ENCODE measurements at regions of chr3 and their contacts with region 1.

Region 1: DNA sequence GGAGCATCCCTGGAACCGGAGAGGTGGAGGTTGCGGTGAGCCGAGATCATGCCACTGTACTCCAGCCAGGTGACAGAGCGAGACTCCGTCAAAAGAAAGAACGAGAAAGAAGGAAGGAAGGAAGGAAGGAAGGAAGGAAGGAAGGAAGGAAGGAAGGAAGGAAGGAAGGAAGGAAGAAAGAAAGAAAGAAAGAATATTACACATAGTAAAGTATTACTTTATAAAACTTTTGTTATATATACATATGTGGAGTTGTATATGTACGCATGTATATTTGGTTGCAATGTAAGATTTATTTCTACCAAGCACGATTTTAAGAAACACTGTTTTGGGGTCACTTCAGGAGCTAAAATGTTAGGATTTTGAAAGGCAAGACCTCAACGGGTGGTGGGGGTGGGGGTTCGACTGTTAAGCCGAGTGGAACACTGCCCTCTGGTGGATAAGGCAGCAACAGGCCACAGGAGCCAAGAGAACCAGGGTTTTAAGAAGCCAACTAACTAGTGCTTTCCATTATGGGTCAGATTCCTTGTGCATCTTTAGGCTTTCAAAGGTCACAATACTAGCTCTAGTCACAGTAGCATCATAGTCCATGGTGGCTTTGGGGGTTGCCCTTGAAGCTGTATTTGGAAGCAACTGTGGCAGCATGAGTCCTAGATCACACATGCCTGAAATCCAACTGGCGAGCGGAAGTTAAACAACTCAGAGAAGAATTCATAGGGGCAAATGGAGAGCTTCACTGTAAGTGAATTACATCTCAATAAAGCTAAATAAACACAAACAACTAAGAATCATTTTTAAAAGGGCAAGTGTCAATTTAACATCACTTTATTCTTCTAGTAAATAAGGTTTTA is 22.5 kb downstream of the GLB1 start:
- DNase-seq: peak; percentile 83
- ATAC-seq: peak; percentile 91
- H3K4me3 Mint-ChIP-seq: no peak overlapping the region
- H3K27ac Mint-ChIP-seq: peak overlapping the region; percentile 17
- H3K4me1 Mint-ChIP-seq: peaks cover 26% of the 10 kb centered on the region
- H3K27me3 Mint-ChIP-seq: no peaks in the 10 kb centered on the region

Region 2: GRCh38 chr3:32758375-32758753 is 316.1 kb before region 1 on chr3:
- CTCF ChIA-PET with region 1: no interaction called
- POLR2A ChIA-PET with region 1: no interaction called
- intact Hi-C with region 1: loop called in 1 of 2 experiments (anchors 10 kb)
- DNase-seq: no peak
- ATAC-seq: peak; percentile 60
- H3K4me3 Mint-ChIP-seq: no peak overlapping the region
- H3K27ac Mint-ChIP-seq: no peak overlapping the region
- H3K4me1 Mint-ChIP-seq: peaks cover 8% of the 10 kb centered on the region
- H3K27me3 Mint-ChIP-seq: no peaks in the 10 kb centered on the region

Region 3: DNA sequence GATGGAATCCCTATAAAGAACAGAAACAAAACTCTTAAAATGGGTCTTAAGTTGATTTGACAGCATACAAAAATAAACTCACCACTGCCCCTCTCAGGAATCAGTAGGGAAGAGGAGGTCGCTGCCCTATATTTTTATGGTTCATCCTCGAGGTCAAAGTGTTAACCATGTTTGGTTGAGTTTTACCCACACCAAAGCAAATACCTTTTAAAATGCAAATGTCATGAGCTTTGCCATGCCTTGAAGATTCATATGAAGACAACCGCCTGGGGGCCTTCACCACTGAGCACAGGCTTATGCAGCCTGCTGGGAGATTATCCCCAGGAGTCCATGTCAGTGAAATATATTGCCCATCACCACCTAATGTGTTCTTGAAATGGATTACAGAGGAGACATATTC is 43.6 kb before region 1 on chr3:
- CTCF ChIA-PET with region 1: interaction called, 8 read pairs
- POLR2A ChIA-PET with region 1: no interaction called
- intact Hi-C with region 1: loop called in 1 of 2 experiments (anchors 1 kb)
- DNase-seq: peak; percentile 73
- ATAC-seq: peak; percentile 91
- H3K4me3 Mint-ChIP-seq: no peak overlapping the region
- H3K27ac Mint-ChIP-seq: peak overlapping the region; percentile 51
- H3K4me1 Mint-ChIP-seq: peaks cover 31% of the 10 kb centered on the region
- H3K27me3 Mint-ChIP-seq: no peaks in the 10 kb centered on the region

Region 4: DNA sequence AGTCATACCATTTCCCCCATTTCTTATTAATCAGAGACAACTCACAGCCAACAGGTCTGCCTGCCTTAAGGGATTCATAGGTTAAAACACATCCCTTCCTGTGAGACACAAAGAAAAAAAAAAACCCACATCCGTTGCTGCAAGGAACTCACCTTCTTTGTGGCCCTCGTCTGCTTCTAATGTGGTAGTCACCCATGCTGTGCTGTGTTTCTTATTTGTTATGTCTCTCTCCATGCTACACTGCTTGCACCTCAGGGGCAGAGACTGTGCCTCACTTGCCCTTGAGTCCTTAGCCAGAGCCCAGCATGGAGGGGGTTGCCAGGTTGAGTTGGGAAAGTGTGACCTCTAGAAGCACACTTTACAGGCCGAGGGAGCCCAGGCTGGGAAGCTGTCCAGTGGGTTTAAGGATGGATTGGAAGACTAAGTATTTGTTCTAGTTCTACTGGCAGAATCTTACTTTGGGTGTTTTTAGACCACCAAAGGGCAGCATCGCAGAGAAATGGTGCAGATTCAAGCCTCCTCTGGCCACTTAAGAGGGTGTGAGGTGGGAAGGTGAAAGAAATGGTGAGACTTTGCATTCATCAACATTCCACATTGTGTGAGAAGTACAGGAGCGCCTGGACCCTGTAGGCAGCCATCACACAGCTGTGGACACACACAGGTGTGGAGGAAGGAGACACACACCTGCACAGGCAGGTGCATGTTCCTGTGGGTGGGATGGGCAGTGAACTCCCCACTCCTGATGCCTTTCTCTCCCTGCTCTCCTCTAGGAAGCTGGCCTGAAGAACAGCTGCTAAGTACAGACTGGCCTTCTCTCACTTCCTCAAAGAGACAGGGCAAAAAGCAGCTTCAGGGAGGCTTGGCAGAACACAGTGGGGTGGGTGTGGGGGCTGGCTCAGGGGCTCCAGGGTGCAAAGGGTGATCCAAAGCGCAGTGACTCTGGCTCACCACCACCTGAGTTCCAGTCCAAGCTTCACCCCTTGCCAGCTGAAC is 26.3 kb before region 1 on chr3:
- CTCF ChIA-PET with region 1: interaction called, 11 read pairs
- POLR2A ChIA-PET with region 1: no interaction called
- intact Hi-C with region 1: loop called in 1 of 2 experiments (anchors 1 kb)
- DNase-seq: peak; percentile 65
- ATAC-seq: peak; percentile 84
- H3K4me3 Mint-ChIP-seq: peak overlapping the region; percentile 29
- H3K27ac Mint-ChIP-seq: peak overlapping the region; percentile 94
- H3K4me1 Mint-ChIP-seq: peaks cover 74% of the 10 kb centered on the region
- H3K27me3 Mint-ChIP-seq: no peaks in the 10 kb centered on the region

Region 5: GRCh38 chr3:33096093-33096868 is 21.8 kb after region 1 on chr3:
- CTCF ChIA-PET with region 1: interaction called, 10 read pairs
- POLR2A ChIA-PET with region 1: no interaction called
- intact Hi-C with region 1: no loop called
- DNase-seq: peak; percentile 66
- ATAC-seq: peak; percentile 46
- H3K4me3 Mint-ChIP-seq: peak overlapping the region; percentile 99
- H3K27ac Mint-ChIP-seq: peak overlapping the region; percentile 92
- H3K4me1 Mint-ChIP-seq: peaks cover 40% of the 10 kb centered on the region
- H3K27me3 Mint-ChIP-seq: no peaks in the 10 kb centered on the region

Region 6: GRCh38 chr3:34449305-34449704 is 1374.9 kb after region 1 on chr3:
- CTCF ChIA-PET with region 1: no interaction called
- POLR2A ChIA-PET with region 1: no interaction called
- intact Hi-C with region 1: no loop called
- DNase-seq: no peak
- ATAC-seq: no peak
- H3K4me3 Mint-ChIP-seq: no peak overlapping the region
- H3K27ac Mint-ChIP-seq: no peak overlapping the region
- H3K4me1 Mint-ChIP-seq: no peaks in the 10 kb centered on the region
- H3K27me3 Mint-ChIP-seq: no peaks in the 10 kb centered on the region